PC-9 (cell line): ENCODE measurements at regions of chr10 and their contacts with region 1.

Region 1: GRCh38 chr10:72079356-72079755 is 9.0 kb downstream of the SPOCK2 start:
- DNase-seq: peak in 1 of 2 experiments; percentile 25
- H3K4me3 ChIP-seq: no peak overlapping the region
- H3K27ac ChIP-seq: peak overlapping the region; percentile 86
- H3K4me1 ChIP-seq: peaks cover 54% of the 10 kb centered on the region
- H3K27me3 ChIP-seq: no peaks in the 10 kb centered on the region
- CTCF ChIP-seq: no peak

Region 2: GRCh38 chr10:71893920-71894319 is 185.4 kb before region 1 on chr10:
- CTCF ChIA-PET with region 1: no interaction called
- POLR2A ChIA-PET with region 1: no interaction called
- intact Hi-C with region 1: loop called (anchors 1 kb)
- DNase-seq: no peak
- H3K4me3 ChIP-seq: no peak overlapping the region
- H3K27ac ChIP-seq: no peak overlapping the region
- H3K4me1 ChIP-seq: peaks cover 16% of the 10 kb centered on the region
- H3K27me3 ChIP-seq: no peaks in the 10 kb centered on the region
- CTCF ChIP-seq: no peak

Region 3: DNA sequence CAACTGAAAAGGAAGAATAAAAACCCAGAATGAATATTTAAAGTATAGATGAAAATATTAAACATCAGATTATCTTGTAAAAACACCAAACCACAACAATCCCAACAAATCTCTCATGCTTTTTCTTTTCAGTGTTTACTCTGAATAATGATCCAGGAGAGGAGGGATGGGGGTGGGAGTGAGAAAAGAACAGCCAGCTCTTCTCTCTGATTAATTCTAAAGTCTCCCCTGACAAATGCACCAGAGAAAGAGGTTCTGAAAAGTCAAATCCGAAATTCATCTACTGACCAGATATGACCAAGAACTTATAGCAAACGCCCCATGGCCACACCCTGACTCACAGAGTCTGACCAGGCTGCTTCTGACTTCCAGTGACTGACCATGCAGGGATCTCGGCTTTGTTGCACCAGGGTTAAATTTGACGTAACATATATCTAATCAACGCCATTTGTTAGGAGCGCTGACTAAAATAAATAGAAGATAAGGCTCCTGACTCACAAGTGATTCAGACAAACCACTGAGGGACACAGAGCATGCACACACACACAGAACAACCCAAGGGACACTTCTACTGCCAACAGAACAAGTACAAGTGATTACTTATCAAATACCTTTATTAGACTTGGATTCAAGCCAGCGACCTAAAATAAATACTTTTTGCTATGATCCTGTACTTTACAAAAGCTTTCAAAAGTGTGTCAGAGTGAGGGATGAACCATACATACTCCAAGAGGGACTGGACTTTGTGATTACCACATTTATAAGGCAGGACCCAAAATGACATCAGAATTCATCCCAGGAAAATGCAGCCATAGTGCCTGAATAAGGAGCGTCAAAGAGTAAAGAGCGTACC is 18.3 kb after region 1 on chr10:
- CTCF ChIA-PET with region 1: no interaction called
- POLR2A ChIA-PET with region 1: no interaction called
- intact Hi-C with region 1: loop called (anchors 1 kb)
- DNase-seq: peak; percentile 84 to 100
- H3K4me3 ChIP-seq: no peak overlapping the region
- H3K27ac ChIP-seq: peak overlapping the region; percentile 68
- H3K4me1 ChIP-seq: peaks cover 49% of the 10 kb centered on the region
- H3K27me3 ChIP-seq: no peaks in the 10 kb centered on the region
- CTCF ChIP-seq: no peak

Region 4: GRCh38 chr10:72158176-72158575 is 78.8 kb after region 1 on chr10:
- CTCF ChIA-PET with region 1: no interaction called
- POLR2A ChIA-PET with region 1: interaction called, 17 read pairs
- intact Hi-C with region 1: no loop called
- DNase-seq: no peak
- H3K4me3 ChIP-seq: no peak overlapping the region
- H3K27ac ChIP-seq: no peak overlapping the region
- H3K4me1 ChIP-seq: no peaks in the 10 kb centered on the region
- H3K27me3 ChIP-seq: no peaks in the 10 kb centered on the region
- CTCF ChIP-seq: no peak

Region 5: GRCh38 chr10:72204296-72204695 is 124.9 kb after region 1 on chr10:
- CTCF ChIA-PET with region 1: no interaction called
- POLR2A ChIA-PET with region 1: no interaction called
- intact Hi-C with region 1: no loop called
- DNase-seq: no peak
- H3K4me3 ChIP-seq: no peak overlapping the region
- H3K27ac ChIP-seq: no peak overlapping the region
- H3K4me1 ChIP-seq: peaks cover 2% of the 10 kb centered on the region; the same call in 1 of the 2 replicates
- H3K27me3 ChIP-seq: no peaks in the 10 kb centered on the region
- CTCF ChIP-seq: no peak

Region 6: GRCh38 chr10:72215652-72216549 is 136.5 kb after region 1 on chr10 and contains the starts of genes ANAPC16 and ASCC1:
- CTCF ChIA-PET with region 1: no interaction called
- POLR2A ChIA-PET with region 1: no interaction called
- intact Hi-C with region 1: loop called (anchors 1 kb)
- DNase-seq: peak; percentile 88 to 98
- H3K4me3 ChIP-seq: peak within 1 kb of the TSS; percentile 80
- H3K27ac ChIP-seq: peak within 1 kb of the TSS; percentile 90
- H3K4me1 ChIP-seq: peaks cover 45% of the 10 kb centered on the region
- H3K27me3 ChIP-seq: no peaks in the 10 kb centered on the region
- CTCF ChIP-seq: no peak
- total RNA-seq, gene ANAPC16: 142 and 171 TPM in 2 replicates
- total RNA-seq, gene ASCC1: 108 and 129 TPM in 2 replicates

Region 7: DNA sequence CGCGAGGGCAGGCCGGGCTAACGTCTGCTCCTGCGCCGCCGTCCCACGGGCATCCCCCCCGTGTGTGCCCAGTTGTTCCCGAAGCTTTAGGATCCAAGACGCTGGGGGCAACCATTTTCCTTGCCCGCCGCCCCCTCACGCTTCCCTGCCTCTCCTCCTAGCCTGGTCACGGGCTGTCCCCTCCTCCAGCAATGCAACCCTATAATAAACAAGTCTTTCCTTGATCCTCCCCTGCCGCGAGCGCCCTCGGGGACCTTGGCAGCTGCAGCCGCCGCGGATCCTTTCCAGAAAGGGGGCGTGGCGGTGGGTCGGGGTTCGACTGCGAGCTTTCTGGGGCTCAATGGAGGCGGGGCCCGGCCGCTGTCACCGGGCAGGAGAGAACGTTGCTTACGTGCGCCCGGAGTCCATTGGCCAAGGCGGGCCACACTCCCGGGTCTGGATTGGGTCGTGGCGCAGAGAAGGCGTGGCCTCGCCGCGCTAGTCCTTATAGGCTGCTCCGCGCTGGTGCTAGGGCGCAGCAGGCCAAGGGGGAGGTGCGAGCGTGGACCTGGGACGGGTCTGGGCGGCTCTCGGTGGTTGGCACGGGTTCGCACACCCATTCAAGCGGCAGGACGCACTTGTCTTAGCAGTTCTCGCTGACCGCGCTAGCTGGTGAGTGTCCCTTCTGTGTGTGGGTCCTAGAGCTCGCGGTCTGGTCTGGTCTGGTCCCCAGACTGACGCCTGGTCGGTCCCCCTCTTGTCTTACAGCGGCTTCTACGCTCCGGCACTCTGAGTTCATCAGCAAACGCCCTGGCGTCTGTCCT is 194.3 kb after region 1 on chr10 and contains the start of gene DDIT4:
- CTCF ChIA-PET with region 1: no interaction called
- POLR2A ChIA-PET with region 1: interaction called, 6 read pairs
- intact Hi-C with region 1: loop called (anchors 1 kb)
- DNase-seq: peak; percentile 99 to 100
- H3K4me3 ChIP-seq: peak within 1 kb of the TSS; percentile 88
- H3K27ac ChIP-seq: peak within 1 kb of the TSS; percentile 99
- H3K4me1 ChIP-seq: peaks cover 46% of the 10 kb centered on the region
- H3K27me3 ChIP-seq: no peaks in the 10 kb centered on the region
- CTCF ChIP-seq: no peak
- total RNA-seq, gene DDIT4: 178 and 212 TPM in 2 replicates

Region 8: DNA sequence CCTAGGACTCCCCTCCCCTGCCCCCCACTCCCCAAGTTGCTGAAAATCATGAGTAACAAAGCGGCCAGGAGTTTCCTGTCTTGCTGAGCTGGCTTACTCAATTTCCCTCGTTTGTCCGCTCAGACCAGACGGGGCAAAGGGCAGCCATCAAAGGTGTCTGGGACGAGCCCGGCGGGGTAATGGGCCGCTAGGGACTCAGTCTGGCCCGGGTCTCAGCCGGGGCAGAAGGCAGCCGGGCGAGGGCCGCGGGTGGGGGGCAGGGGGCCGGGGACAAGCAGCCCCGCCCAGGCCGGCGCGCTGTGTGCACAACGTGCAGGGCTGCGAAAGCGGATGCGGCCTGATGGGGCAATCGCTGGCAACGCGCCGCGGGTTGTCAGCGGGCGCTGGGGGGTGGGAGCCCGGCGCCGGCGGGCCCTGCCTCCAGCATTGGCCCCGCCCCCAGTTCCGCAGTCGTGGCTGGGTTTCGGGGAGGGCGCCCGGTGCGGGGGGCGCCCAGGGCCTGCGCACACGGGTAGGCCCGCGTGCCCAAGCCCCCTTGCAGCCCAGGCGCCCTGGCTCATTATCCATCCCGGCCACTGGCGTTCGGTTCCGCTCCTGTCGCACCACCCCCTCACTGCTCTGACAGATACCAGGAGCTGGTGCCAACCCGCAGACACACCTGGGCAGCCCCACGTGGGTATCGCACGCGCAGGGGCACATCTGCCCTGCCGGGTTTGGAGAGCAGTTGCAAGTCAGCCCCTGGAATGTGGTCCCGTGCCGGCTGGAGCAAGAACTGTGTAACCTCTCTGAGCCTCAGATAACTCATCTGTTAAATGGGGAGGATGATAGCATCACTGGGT is 240.3 kb after region 1 on chr10:
- CTCF ChIA-PET with region 1: no interaction called
- POLR2A ChIA-PET with region 1: no interaction called
- intact Hi-C with region 1: loop called (anchors 2 kb)
- DNase-seq: peak; percentile 91 to 95
- H3K4me3 ChIP-seq: peak overlapping the region; percentile 59
- H3K27ac ChIP-seq: peak overlapping the region; percentile 99
- H3K4me1 ChIP-seq: peaks cover 95% of the 10 kb centered on the region
- H3K27me3 ChIP-seq: no peaks in the 10 kb centered on the region
- CTCF ChIP-seq: no peak